SK-N-SH (cell line): ENCODE measurements at regions of chr14 and their contacts with region 1.

Region 1: GRCh38 chr14:76050797-76051392 is 65.3 kb downstream of the IFT43 start:
- DNase-seq: peak; percentile 63
- H3K4me3 ChIP-seq: peak overlapping the region in 1 of 2 experiments; percentile 9; a peak in 1 of 4 replicates
- H3K27ac ChIP-seq: no peak overlapping the region
- H3K4me1 ChIP-seq: peaks cover 0 to 14% of the 10 kb centered on the region in 2 experiments; a peak in 2 of 4 replicates
- H3K27me3 ChIP-seq: no peaks in the 10 kb centered on the region
- CTCF ChIP-seq: peak; percentile 89
- EP300 ChIP-seq: no peak
- RAD21 ChIP-seq: peak; percentile 99

Region 2: GRCh38 chr14:76034566-76034965 is 16.3 kb before region 1 on chr14:
- CTCF ChIA-PET with region 1: interaction called, 27 read pairs
- POLR2A ChIA-PET with region 1: no interaction called
- DNase-seq: no peak
- H3K4me3 ChIP-seq: no peak overlapping the region
- H3K27ac ChIP-seq: no peak overlapping the region
- H3K4me1 ChIP-seq: no peaks in the 10 kb centered on the region
- H3K27me3 ChIP-seq: no peaks in the 10 kb centered on the region
- CTCF ChIP-seq: no peak
- EP300 ChIP-seq: no peak
- RAD21 ChIP-seq: no peak

Region 3: GRCh38 chr14:76083796-76084765 is 33.2 kb after region 1 on chr14:
- CTCF ChIA-PET with region 1: interaction called, 15 read pairs
- POLR2A ChIA-PET with region 1: no interaction called
- DNase-seq: no peak
- H3K4me3 ChIP-seq: no peak overlapping the region
- H3K27ac ChIP-seq: no peak overlapping the region
- H3K4me1 ChIP-seq: peaks cover 0 to 3% of the 10 kb centered on the region in 2 experiments; a peak in 1 of 4 replicates
- H3K27me3 ChIP-seq: no peaks in the 10 kb centered on the region
- CTCF ChIP-seq: no peak
- EP300 ChIP-seq: no peak
- RAD21 ChIP-seq: no peak

Region 4: GRCh38 chr14:76115010-76115422 is 64.1 kb after region 1 on chr14:
- CTCF ChIA-PET with region 1: interaction called, 11 read pairs
- POLR2A ChIA-PET with region 1: no interaction called
- DNase-seq: no peak
- H3K4me3 ChIP-seq: no peak overlapping the region
- H3K27ac ChIP-seq: no peak overlapping the region
- H3K4me1 ChIP-seq: peaks cover 0 to 13% of the 10 kb centered on the region in 2 experiments; a peak in 2 of 4 replicates
- H3K27me3 ChIP-seq: peaks cover 8% of the 10 kb centered on the region; the same call in 1 of the 2 replicates
- CTCF ChIP-seq: no peak
- EP300 ChIP-seq: no peak
- RAD21 ChIP-seq: 0 out of 2 replicates have a peak, but pooled peaks have one; percentile 25

Region 5: GRCh38 chr14:76375947-76376404 is 325.1 kb after region 1 on chr14 and contains the start of gene ESRRB:
- CTCF ChIA-PET with region 1: interaction called, 13 read pairs
- POLR2A ChIA-PET with region 1: no interaction called
- DNase-seq: peak; percentile 54
- H3K4me3 ChIP-seq: peak within 1 kb of the TSS; percentile 42 to 55
- H3K27ac ChIP-seq: no peak within 1 kb of the TSS
- H3K4me1 ChIP-seq: peaks cover 3 to 7% of the 10 kb centered on the region in 2 experiments; a peak in 2 of 4 replicates
- H3K27me3 ChIP-seq: peaks cover 85% of the 10 kb centered on the region
- CTCF ChIP-seq: no peak
- EP300 ChIP-seq: no peak
- RAD21 ChIP-seq: no peak
- polyA plus RNA-seq, gene ESRRB: 0.05 and 0.06 TPM in 2 replicates